Natural killer cell (primary cell): ENCODE measurements at regions of chr9 and their contacts with region 1.

Region 1: GRCh38 chr9:127199001-127199791 is 65.4 kb upstream of the GARNL3 start:
- DNase-seq: peak; percentile 79 to 87
- ATAC-seq: peak; percentile 76 to 96 (median 91)
- H3K4me3 ChIP-seq: no peak overlapping the region
- H3K4me3 Mint-ChIP-seq: no peak overlapping the region
- H3K27ac ChIP-seq: no peak overlapping the region
- H3K27ac Mint-ChIP-seq: no peak overlapping the region
- H3K4me1 ChIP-seq: peaks cover 7% of the 10 kb centered on the region
- H3K4me1 Mint-ChIP-seq: peaks cover 0 to 9% of the 10 kb centered on the region in 2 donors
- H3K27me3 ChIP-seq: no peaks in the 10 kb centered on the region
- H3K27me3 Mint-ChIP-seq: no peaks in the 10 kb centered on the region
- CTCF ChIP-seq: peak; percentile 90

Region 2: GRCh38 chr9:126939821-126940221 is 259.4 kb before region 1 on chr9:
- intact Hi-C with region 1: loop called (anchors 1 kb)
- DNase-seq: no peak
- ATAC-seq: no peak
- H3K4me3 ChIP-seq: no peak overlapping the region
- H3K4me3 Mint-ChIP-seq: no peak overlapping the region
- H3K27ac ChIP-seq: no peak overlapping the region
- H3K27ac Mint-ChIP-seq: no peak overlapping the region
- H3K4me1 ChIP-seq: no peaks in the 10 kb centered on the region
- H3K4me1 Mint-ChIP-seq: peaks cover 6 to 11% of the 10 kb centered on the region in 2 donors
- H3K27me3 ChIP-seq: no peaks in the 10 kb centered on the region
- H3K27me3 Mint-ChIP-seq: peaks cover 0 to 10% of the 10 kb centered on the region in 2 donors
- CTCF ChIP-seq: no peak

Region 3: GRCh38 chr9:126965541-126966428 is 233.4 kb before region 1 on chr9:
- intact Hi-C with region 1: loop called (anchors 1 kb)
- DNase-seq: peak; percentile 29 to 76
- ATAC-seq: peak; percentile 69 to 88 (median 78)
- H3K4me3 ChIP-seq: no peak overlapping the region
- H3K4me3 Mint-ChIP-seq: no peak overlapping the region
- H3K27ac ChIP-seq: no peak overlapping the region
- H3K27ac Mint-ChIP-seq: no peak overlapping the region
- H3K4me1 ChIP-seq: no peaks in the 10 kb centered on the region
- H3K4me1 Mint-ChIP-seq: peaks cover 5 to 7% of the 10 kb centered on the region in 2 donors
- H3K27me3 ChIP-seq: no peaks in the 10 kb centered on the region
- H3K27me3 Mint-ChIP-seq: peaks cover 0 to 14% of the 10 kb centered on the region in 2 donors
- CTCF ChIP-seq: peak; percentile 76

Region 4: DNA sequence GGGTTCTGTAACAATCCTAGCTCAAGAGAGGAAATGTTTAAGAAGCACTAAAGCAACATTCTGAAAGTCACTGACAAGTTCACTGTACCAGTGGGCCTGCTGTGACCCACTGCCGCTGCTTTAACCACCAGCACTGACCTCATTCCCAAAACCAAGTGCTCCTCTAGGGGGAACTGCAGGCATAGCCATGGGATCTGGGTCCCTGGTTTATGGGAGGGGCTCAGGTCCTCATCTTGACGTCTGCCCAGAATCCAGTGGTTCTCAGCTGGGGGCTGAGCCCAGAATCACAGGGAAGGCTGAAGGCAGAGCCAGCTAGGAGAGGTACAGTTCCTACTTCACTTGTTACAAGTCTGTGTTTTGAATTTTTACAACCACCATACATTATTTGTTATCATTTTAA is 161.6 kb after region 1 on chr9:
- intact Hi-C with region 1: no loop called
- DNase-seq: peak in 1 of 2 donors; percentile 14
- ATAC-seq: no peak
- H3K4me3 ChIP-seq: no peak overlapping the region
- H3K4me3 Mint-ChIP-seq: no peak overlapping the region
- H3K27ac ChIP-seq: no peak overlapping the region
- H3K27ac Mint-ChIP-seq: peak overlapping the region in 1 of 2 donors; percentile 66
- H3K4me1 ChIP-seq: peaks cover 11% of the 10 kb centered on the region
- H3K4me1 Mint-ChIP-seq: peaks cover 9 to 14% of the 10 kb centered on the region in 2 donors
- H3K27me3 ChIP-seq: no peaks in the 10 kb centered on the region
- H3K27me3 Mint-ChIP-seq: peaks cover 2% of the 10 kb centered on the region in 2 donors
- CTCF ChIP-seq: no peak